Posterior vena cava (tissue), 2 donors: ENCODE measurements at regions of chr7 and their contacts with region 1.

Region 1: GRCh38 chr7:135672560-135673359 is 10.4 kb downstream of the STMP1 start:
- DNase-seq: no peak

Region 2: DNA sequence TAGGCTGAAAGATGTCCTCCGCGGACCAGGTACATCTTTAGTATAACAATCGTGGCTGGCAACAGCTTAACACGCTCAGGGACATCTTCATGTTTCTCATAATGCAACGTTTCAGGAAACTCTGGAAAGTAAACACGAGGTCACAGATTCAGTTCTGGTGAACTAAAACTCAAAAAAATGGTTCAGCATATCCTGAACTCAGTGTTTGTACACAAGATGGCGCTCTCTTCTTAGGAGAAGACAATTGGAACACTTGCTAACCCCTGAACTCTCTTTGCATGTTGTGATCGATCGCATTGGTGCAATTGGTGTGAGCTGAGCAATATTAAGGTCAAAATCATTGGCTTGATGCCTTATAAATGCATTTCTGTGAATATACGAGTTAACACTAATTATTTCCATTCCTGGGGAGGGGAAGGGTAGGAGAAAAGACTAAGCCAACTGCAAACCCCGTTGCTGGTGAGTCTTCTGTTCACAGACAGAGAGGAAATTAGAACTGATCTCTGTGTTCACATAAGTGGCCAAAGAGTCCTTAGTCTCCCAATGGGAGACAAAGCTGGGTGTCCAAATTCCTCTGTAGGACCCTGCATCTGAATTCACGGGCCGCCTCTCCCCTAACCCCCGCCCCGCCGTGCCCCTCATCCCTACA is 128.4 kb after region 1 on chr7:
- intact Hi-C with region 1: loop called in 1 of 2 experiments (anchors 10 kb)
- DNase-seq: no peak

Region 3: DNA sequence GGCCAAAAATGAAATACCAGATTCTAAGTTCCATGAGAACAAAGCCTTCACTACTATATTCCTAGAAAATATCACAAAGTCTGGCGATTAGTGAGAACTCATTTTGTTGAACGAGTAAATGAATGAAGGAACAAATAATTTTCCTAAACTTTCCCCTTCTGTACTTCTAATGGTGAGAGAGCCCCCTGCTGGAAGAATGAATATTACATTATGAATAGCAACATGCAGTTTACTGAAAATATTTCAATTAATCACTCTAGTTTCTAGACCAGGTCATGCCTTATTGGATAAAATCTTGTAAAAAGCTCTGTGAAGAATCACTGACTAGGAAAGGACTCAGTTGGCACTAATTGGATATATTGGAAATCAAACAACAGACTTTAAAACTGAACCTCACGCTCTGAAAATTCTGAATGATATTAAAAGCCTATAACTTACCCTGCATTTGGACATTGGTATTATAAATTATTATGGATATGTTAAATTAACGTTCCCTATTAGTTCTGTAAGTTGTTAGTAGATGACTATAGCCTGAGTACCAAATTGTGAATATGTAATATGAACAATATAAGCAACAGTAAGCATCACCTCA is 336.8 kb after region 1 on chr7:
- intact Hi-C with region 1: loop called in 1 of 2 experiments (anchors 5 kb)
- DNase-seq: no peak